Activated B cell treated with CpG ODN at 0.5 μM for 24 hours (primary cell): ENCODE measurements at regions of chr7 and their contacts with region 1.

Region 1: DNA sequence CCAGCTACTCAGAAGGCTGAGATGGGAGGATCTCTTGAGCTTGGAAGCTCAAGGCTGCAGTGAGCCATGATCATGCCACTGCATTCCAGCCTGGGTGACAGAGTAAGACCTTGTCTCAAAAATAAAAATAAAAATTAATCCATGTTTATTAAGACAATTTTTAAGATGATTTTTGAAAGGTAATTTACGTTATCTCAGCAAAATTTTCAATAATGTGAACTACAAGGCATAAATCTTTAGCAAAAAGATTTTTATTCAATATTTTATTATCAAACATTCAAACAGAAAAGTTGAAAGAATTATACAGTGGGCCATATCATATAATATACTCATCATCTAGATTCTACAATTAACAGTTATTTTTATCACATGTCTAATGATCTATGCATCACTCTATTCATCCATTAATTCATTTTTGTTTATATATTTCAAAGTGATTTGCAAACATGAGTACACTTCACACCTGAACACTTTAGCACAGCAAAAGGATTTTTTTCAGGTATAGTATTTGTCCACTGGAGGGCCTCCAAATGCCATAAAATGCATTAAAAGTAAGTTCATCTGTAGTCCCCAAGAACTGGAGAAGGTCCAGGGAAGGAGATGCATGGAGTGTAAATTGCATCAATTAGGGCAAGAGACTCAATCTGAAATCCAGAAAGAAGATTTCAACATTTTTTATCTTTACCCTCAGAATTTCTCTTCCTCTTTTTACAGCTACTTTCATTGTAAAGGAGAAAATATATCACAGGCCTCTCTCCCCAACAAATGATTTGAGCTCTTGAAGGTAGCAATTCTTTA is 38.6 kb upstream of the RSBN1L start:
- DNase-seq: no peak
- ATAC-seq: peak; percentile 45
- H3K4me3 Mint-ChIP-seq: no peak overlapping the region
- H3K27ac Mint-ChIP-seq: no peak overlapping the region
- H3K4me1 Mint-ChIP-seq: no peaks in the 10 kb centered on the region
- H3K27me3 Mint-ChIP-seq: no peaks in the 10 kb centered on the region
- CTCF ChIP-seq: no peak

Region 2: DNA sequence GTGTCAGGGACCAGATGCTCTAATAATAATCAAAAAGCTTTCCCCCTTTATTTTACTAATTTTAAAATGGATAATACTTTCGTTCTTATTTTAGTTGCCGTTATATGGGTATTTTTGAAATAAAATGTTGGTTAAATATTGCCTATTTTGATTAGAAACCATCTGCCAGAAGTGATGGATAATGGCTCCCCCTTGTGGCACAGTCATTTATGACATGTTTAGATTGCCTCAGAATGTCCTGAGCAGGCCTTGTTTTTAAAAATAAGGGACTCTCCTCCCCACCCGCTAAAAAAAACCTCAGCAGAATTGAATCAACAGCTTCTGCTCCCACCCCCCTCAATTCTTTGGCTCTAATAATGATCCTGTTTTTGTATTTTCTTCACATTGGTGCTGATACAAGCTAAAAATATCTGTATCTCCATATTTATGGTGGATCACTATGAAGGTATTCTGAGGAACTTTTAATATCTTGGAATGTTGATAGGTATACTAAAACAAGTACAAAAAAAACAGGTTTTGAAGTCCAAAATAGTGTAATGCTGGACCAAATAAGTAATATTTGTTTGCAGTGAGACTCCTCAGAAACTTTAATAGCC is 101.8 kb after region 1 on chr7:
- CTCF ChIA-PET with region 1: interaction called, 67 read pairs
- POLR2A ChIA-PET with region 1: no interaction called
- intact Hi-C with region 1: loop called (anchors 1 kb)
- DNase-seq: no peak
- ATAC-seq: peak; percentile 64
- H3K4me3 Mint-ChIP-seq: no peak overlapping the region
- H3K27ac Mint-ChIP-seq: peak overlapping the region; percentile 50
- H3K4me1 Mint-ChIP-seq: peaks cover 52% of the 10 kb centered on the region
- H3K27me3 Mint-ChIP-seq: no peaks in the 10 kb centered on the region
- CTCF ChIP-seq: peak; percentile 22

Region 3: DNA sequence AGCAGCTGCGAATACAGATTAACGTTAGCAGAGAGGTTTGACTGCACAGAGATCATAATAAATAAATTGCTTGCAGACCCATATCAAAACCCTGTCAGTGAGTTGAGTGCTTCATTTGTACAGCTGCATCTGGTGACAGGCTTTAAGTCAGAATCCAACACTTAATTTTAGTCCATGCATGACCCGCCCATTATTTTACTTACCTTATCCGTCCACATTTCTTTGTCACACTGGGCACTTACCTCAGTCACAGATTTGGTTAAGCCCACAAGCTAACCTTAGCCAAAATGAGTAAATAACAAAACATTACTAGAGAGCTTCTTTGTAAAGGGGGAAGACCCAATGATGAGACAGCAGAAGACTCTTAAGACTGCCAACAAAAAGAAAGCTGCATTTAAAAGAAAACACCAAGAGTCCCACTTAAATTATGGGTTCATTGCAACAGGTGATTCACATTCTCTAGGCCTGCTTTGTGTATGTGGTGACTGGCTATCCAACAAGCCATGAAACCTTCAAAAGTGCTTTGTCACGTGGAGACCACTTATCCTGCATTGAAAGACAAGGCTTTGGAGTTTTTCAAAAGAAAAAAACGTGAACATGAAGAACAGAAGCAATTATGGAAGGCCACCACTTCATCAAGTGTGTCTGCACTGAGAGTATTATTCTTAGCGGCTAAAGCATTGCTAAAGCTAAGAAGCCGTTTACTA is 173.2 kb after region 1 on chr7:
- CTCF ChIA-PET with region 1: no interaction called
- POLR2A ChIA-PET with region 1: interaction called, 13 read pairs
- intact Hi-C with region 1: no loop called
- DNase-seq: no peak
- ATAC-seq: no peak
- H3K4me3 Mint-ChIP-seq: no peak overlapping the region
- H3K27ac Mint-ChIP-seq: peak overlapping the region; percentile 55
- H3K4me1 Mint-ChIP-seq: peaks cover 85% of the 10 kb centered on the region
- H3K27me3 Mint-ChIP-seq: no peaks in the 10 kb centered on the region
- CTCF ChIP-seq: no peak

Region 4: DNA sequence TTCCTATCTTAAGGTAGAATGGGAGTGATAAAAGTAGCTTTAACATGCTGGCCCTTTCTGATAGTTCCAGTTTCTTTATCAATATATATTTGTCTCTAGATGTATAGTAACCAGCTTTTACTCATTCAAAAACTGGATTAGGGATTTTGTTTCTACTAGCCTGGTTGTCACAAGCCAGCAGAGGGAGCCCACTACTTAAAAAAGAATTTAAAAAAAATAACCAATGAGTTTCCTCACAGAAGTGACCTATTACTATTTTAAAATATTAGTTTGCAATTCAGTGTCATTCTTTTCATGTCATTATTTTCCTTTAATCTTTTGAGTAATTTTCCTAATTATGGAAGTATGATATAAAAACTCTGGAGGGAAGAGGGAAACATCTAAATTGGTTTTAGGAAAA is 283.0 kb after region 1 on chr7:
- CTCF ChIA-PET with region 1: interaction called, 4 read pairs
- POLR2A ChIA-PET with region 1: no interaction called
- intact Hi-C with region 1: loop called (anchors 1 kb)
- DNase-seq: no peak
- ATAC-seq: peak; percentile 25
- H3K4me3 Mint-ChIP-seq: no peak overlapping the region
- H3K27ac Mint-ChIP-seq: no peak overlapping the region
- H3K4me1 Mint-ChIP-seq: peaks cover 7% of the 10 kb centered on the region
- H3K27me3 Mint-ChIP-seq: no peaks in the 10 kb centered on the region
- CTCF ChIP-seq: no peak

Region 5: DNA sequence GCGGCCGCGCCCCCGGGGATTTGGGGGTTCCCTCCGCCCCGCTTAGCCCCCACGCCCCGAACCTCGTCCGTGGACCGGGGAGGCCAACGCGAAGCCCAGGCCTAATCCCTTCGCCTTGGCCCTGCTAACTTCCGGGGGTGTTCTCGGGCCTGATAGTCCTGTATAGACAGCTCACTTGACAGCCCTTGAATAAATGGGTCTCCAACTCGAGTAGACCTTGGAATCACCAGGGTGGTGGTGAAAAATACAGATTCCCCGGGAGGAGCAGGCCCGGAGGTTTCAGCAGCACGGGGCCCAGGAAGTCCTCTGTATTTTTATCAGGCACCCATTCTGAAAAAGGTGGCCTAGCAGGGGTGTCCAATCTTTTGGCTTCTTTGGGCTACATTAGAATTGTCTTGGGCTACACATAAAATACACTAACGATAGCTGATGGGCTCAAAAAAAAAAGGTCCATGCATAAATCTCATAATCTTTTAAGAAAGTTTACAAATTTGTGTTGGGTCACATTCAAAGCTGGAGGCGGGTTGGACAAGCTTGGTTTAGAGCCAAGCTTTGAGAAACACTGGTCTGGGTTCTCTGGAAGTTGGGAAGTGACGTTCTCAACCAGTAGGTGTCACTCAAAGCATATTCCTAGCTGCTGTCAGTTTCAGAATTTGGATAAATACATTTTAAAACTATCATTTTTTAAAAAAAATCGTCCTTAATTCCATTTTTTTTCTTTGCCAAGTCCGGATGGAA is 362.7 kb after region 1 on chr7:
- CTCF ChIA-PET with region 1: no interaction called
- POLR2A ChIA-PET with region 1: no interaction called
- intact Hi-C with region 1: loop called (anchors 5 kb)
- DNase-seq: no peak
- ATAC-seq: peak; percentile 35
- H3K4me3 Mint-ChIP-seq: peak overlapping the region; percentile 81
- H3K27ac Mint-ChIP-seq: peak overlapping the region; percentile 77
- H3K4me1 Mint-ChIP-seq: peaks cover 17% of the 10 kb centered on the region
- H3K27me3 Mint-ChIP-seq: no peaks in the 10 kb centered on the region
- CTCF ChIP-seq: no peak

Region 6: DNA sequence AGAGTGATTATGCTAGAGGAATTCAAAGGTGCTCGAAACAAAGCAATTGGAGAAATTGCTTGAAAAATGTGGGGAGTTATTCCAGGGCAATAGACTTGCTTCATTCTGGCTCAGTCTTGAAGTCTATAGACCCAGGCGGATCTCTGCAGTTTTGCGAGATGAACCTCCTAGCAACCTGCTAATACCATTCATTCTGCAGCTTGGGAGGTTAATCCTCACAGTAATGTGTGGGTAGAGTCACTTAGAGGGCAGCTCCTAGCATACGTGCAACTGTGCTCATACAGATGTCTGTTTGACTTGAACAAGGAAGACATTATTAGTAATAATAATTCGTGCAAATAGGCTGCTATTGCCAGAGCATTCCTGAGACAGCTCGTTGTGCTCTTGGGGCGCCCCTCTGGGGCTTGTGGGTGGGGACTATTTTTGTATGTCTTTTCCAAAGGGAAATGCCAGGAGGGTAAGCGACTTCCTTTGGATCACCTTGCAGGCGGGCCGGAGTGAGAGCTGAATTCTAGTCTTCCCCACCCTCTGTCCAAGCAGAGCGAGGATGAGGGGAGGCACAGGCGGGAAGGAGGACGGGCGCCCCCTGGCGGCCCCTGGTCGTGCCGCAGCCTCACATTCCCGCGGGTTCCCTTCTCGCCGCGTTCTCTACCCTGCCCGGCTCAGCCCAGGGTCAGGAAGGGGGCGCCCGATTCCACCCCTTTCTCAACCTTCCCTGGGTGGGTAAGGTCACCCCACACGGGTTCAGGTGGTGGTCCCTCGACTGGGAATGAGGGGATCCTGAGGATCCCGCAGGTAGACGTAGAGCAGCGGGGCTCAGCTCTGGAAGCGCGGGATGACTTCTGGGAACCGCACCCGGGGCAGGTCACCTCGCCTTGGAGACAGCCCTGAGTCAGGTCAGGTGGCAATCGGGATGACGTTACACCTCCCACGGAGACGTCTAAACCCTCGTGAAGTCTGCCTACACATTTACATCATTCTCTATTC is 382.5 kb after region 1 on chr7:
- CTCF ChIA-PET with region 1: interaction called, 22 read pairs
- POLR2A ChIA-PET with region 1: no interaction called
- intact Hi-C with region 1: loop called (anchors 1 kb)
- DNase-seq: peak; percentile 55
- ATAC-seq: peak; percentile 79
- H3K4me3 Mint-ChIP-seq: no peak overlapping the region
- H3K27ac Mint-ChIP-seq: no peak overlapping the region
- H3K4me1 Mint-ChIP-seq: peaks cover 2% of the 10 kb centered on the region
- H3K27me3 Mint-ChIP-seq: peaks cover 20% of the 10 kb centered on the region
- CTCF ChIP-seq: peak; percentile 18

Region 7: GRCh38 chr7:79176859-79177477 is 1519.3 kb after region 1 on chr7:
- CTCF ChIA-PET with region 1: no interaction called
- POLR2A ChIA-PET with region 1: no interaction called
- intact Hi-C with region 1: loop called (anchors 10 kb)
- DNase-seq: no peak
- ATAC-seq: no peak
- H3K4me3 Mint-ChIP-seq: no peak overlapping the region
- H3K27ac Mint-ChIP-seq: no peak overlapping the region
- H3K4me1 Mint-ChIP-seq: no peaks in the 10 kb centered on the region
- H3K27me3 Mint-ChIP-seq: no peaks in the 10 kb centered on the region
- CTCF ChIP-seq: no peak